ENCODE measurements at regions of chr21 and their contacts with region 1.

Region 1: DNA sequence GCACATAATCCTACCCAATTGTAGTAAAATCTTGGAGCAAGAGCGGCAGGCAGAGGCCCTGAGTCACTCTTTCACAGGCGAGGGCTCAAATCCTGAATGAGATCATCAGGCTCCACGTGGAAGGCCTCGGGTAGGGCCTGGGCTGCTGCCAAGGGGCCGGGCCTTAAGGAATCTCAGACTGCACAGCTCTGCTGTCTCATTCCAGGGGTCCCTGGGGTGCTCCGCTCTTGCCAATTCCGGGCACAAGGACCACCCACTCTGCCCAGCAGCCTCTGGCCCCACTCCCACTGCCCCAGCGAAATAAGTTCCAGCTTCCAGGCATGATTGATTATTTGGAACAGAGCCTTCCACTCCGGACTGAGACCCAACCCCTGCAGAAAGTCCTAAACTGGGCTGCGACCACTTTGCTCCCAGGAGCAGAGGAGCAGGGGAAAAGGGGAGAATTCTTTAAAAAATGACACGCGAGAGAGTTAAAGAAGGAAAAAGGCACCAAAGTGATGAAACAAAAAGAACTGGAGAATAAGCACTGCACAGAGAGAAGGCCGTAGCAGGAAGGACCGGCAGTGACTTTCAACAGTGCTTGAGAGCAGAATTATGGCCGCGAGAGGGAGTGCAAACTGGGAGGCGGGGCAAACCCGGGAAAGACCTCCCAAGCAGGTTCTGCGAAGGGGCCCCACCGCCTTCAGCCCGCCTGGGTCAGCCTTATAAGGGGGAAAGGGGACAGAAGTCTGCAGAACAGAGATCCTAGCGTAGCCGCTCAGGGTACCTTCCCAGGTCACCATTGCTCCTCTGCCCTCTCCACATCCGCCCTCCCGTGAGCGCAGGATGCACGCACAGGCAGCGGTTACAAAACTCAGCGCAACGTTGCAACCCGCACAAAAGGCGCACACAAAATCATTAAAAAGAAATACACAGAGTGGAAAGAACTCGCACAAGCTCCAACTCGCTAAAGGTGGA is 2.0 kb downstream of the ADAMTS1 start:
- DNase-seq: peak; percentile 93 to 96 (median 94)
- ATAC-seq: peak; percentile 60 to 68 (median 64)
- H3K4me3 ChIP-seq: peak overlapping the region; percentile 61 to 94 (median 84)
- H3K27ac ChIP-seq: peak overlapping the region; percentile 96 to 98 (median 98)
- H3K4me1 ChIP-seq: peaks cover 15 to 65% (median 46%) of the 10 kb centered on the region in 12 donors
- H3K27me3 ChIP-seq: peaks cover 0 to 38% (median 0%) of the 10 kb centered on the region in 9 donors
- CTCF ChIP-seq: peak in 11 of 12 donors; percentile 4 to 54 (median 30)
- POLR2A ChIP-seq: peak in 1 of 2 donors; percentile 23

Region 2: DNA sequence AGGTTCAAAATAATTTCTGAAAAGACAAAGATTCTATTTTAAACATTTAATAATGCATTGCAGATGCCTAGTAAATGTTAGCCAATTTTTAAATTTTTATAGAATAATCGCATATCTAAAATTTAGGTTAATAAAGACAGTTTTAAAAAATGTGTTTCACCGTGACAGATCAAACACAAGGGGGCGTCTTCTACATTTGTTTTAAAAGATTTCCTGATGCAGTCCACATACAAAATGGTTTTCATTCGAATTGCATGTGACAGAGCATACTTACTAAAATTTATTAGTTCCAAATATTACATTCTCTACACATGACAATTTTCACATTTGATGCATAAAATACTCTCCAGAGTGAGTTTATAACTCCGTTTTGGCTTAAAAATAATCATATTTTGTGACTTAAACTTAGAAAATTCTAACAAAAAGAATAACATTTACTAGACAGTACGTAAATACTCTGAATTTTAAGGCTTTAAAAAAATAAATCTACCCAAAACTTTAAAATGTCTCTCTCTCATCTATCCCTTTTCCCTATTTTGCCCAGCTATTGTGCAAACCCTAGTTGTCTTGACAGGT is 73.6 kb before region 1 on chr21:
- intact Hi-C with region 1: loop called in 9 of 10 experiments (anchors 2 to 5 kb)
- DNase-seq: no peak
- ATAC-seq: peak in 1 of 4 donors; percentile 42
- H3K4me3 ChIP-seq: no peak overlapping the region
- H3K27ac ChIP-seq: peak overlapping the region in 2 of 12 donors; percentile 0 to 7
- H3K4me1 ChIP-seq: peaks cover 0 to 3% (median 0%) of the 10 kb centered on the region in 12 donors
- H3K27me3 ChIP-seq: no peaks in the 10 kb centered on the region
- CTCF ChIP-seq: peak; percentile 57 to 76 (median 70)
- POLR2A ChIP-seq: no peak

Region 3: GRCh38 chr21:26810676-26811415 is 32.4 kb before region 1 on chr21:
- intact Hi-C with region 1: loop called in 1 of 10 experiments (anchors 1 kb)
- DNase-seq: no peak
- ATAC-seq: no peak
- H3K4me3 ChIP-seq: no peak overlapping the region
- H3K27ac ChIP-seq: no peak overlapping the region
- H3K4me1 ChIP-seq: peaks cover 0 to 8% (median 5%) of the 10 kb centered on the region in 12 donors
- H3K27me3 ChIP-seq: no peaks in the 10 kb centered on the region
- CTCF ChIP-seq: no peak
- POLR2A ChIP-seq: no peak

Region 4: GRCh38 chr21:27802816-27803475 is 959.7 kb after region 1 on chr21:
- intact Hi-C with region 1: loop called in 1 of 10 experiments (anchors 10 kb)
- DNase-seq: peak in 1 of 5 donors; percentile 9
- ATAC-seq: no peak
- H3K4me3 ChIP-seq: no peak overlapping the region
- H3K27ac ChIP-seq: no peak overlapping the region
- H3K4me1 ChIP-seq: peaks cover 0 to 12% (median 0%) of the 10 kb centered on the region in 12 donors
- H3K27me3 ChIP-seq: no peaks in the 10 kb centered on the region
- CTCF ChIP-seq: peak; percentile 31 to 71 (median 54)
- POLR2A ChIP-seq: no peak

Region 5: DNA sequence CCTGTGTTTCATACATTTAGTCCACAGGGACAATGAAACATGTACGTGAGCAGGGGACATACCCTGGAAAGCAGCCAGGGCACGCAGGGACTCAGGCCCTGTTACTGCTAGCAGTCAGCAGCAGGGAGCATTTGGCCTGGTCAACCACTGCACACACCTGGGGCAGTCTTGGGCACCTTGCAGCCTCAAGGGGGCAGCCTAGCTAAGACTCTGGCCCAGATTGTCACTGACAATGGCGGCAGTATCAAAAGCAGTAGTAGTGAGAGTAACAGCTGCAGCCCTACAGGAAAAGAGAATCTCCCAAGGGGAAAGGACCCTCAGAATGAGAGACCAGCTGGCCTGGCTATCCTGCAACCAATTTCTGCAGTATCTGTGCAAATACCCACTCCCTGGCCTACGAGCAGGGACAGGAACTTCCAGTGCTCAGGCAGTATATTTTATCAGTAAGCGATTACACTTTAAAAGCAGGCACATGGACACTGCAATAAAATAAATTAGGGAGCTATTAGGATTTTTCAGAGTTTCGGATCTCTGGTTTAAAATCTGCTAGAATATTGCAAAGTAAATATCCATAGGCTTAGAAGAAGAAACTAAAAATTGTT is 1673.8 kb after region 1 on chr21:
- intact Hi-C with region 1: loop called in 4 of 10 experiments (anchors 2 to 5 kb)
- DNase-seq: peak; percentile 69 to 81 (median 73)
- ATAC-seq: peak; percentile 95 to 97 (median 96)
- H3K4me3 ChIP-seq: no peak overlapping the region
- H3K27ac ChIP-seq: peak overlapping the region in 1 of 12 donors; percentile 2
- H3K4me1 ChIP-seq: peaks cover 0 to 20% (median 10%) of the 10 kb centered on the region in 12 donors
- H3K27me3 ChIP-seq: no peaks in the 10 kb centered on the region
- CTCF ChIP-seq: peak; percentile 59 to 82 (median 71)
- POLR2A ChIP-seq: no peak

Region 6: GRCh38 chr21:28754127-28754611 is 1910.9 kb after region 1 on chr21:
- intact Hi-C with region 1: loop called in 5 of 10 experiments (anchors 2 to 5 kb)
- DNase-seq: peak; percentile 55 to 87 (median 84)
- ATAC-seq: peak; percentile 98
- H3K4me3 ChIP-seq: peak overlapping the region in 2 of 12 donors; percentile 19 to 23
- H3K27ac ChIP-seq: peak overlapping the region; percentile 81 to 94 (median 89)
- H3K4me1 ChIP-seq: peaks cover 9 to 59% (median 29%) of the 10 kb centered on the region in 12 donors
- H3K27me3 ChIP-seq: no peaks in the 10 kb centered on the region
- CTCF ChIP-seq: no peak
- POLR2A ChIP-seq: peak in 1 of 2 donors; percentile 52

Measured in heart left ventricle (tissue), 16 donors.